HEK293 (cell line): ENCODE measurements at regions of chr10 and their contacts with region 1.

Region 1: DNA sequence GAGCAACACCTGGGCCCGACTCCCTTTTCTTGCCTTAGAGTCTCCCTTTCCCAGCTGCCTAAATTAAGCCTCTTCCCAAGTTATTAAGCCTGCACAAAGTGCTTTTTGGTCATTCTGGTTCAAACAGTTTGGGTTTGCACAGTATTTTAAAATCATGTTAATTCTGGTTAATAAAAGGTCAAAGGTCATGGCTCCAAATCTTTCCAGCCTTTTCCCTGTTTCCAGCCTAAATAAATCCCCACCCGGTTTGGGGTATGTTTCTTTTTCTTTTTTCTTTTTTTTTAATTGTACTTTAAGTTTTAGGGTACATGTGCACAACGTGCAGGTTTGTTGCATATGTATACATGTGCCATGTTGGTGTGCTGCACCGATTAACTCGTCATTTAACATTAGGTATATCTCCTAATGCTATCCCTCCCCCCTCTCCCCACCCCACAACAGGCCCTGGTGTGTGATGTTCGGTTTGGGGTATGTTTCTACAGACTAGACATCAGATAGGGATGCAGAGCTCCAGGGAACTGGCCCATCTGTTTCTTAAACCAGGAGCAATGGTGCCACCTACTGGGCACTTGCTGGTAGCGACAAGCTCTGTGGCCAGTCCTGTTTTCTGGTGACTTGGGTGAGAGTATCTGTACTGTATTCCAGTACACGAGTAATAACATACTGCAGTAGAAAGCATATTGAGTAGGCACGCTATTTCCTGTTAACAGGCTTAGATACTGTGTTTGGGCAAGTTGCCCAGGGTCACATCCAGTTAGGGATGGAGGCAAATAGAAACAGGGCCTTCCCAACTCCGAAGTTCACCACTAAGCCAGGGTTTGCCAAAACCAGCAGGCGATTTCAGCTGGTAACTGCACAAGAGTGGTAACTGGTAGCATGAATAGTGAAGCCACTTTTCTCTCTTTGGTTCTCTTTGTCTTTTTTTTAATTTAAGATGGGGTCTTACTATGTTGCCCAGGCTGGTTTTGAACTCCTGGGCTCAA is 60.6 kb upstream of the TRIM8 start:
- H3K4me3 ChIP-seq: no peak overlapping the region
- H3K27ac ChIP-seq: no peak overlapping the region
- H3K4me1 ChIP-seq: peaks cover 15% of the 10 kb centered on the region
- CTCF ChIP-seq: peak; percentile 76

Region 2: DNA sequence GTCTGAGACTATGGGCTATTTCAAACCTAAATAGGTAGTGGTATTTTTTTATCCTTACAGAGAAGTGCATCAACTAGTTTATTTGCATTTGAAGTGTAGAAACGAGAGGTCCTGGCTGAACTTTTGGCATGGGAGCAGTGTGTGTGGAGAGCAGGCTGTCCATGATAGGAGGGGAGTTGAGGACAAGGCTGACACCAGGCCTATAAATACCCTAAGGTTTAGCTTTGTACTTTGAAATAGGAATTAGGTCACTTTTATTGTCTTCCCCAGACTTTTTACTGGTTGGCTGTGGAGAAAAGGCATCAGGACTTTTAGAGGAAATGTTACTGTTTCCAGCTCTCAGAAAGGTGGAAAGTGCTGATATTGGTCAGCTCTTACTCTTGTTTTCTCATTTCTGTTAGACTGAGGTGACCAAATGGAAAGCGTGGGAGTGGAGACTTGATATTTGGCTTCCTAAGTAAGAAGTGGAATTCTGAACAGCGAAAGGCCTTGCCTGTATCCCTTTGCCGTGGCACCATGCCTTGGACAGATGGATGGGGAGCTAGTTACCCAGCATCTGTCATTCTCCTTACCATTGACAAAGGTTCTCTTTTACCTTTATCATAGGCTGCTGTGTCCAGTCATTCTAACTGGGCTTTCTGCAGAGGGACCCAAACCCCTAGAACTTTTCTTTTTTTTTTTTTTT is 292.4 kb before region 1 on chr10:
- CTCF ChIA-PET with region 1: no interaction called
- POLR2A ChIA-PET with region 1: no interaction called
- H3K4me3 ChIP-seq: no peak overlapping the region
- H3K27ac ChIP-seq: no peak overlapping the region
- H3K4me1 ChIP-seq: no peaks in the 10 kb centered on the region
- CTCF ChIP-seq: no peak

Region 3: DNA sequence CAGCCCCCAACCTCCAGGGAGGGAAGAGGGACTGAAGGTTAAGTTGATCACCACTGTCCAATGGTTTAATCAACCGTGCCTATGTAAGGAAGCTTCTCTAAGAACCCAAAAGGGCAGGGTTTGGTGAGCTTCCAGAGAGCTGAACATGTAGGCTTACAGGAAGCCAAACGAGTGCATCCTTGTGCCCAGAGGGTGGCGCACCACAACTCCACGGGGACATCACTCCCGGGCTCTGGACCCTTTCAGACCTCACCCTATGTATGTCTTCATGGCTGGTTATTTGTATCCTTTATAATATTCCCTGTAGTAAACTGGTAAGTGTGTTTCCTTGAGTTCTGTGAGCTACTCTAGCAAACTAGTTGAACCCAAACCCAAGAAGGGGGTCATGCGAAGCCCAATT is 199.7 kb before region 1 on chr10:
- CTCF ChIA-PET with region 1: interaction called, 15 read pairs
- POLR2A ChIA-PET with region 1: no interaction called
- H3K4me3 ChIP-seq: no peak overlapping the region
- H3K27ac ChIP-seq: no peak overlapping the region
- H3K4me1 ChIP-seq: 0 out of 2 replicates have a peak, but pooled peaks cover 2% of the 10 kb centered on the region
- CTCF ChIP-seq: no peak

Region 4: GRCh38 chr10:102476466-102477141 is 107.1 kb before region 1 on chr10:
- CTCF ChIA-PET with region 1: interaction called, 26 read pairs
- POLR2A ChIA-PET with region 1: no interaction called
- H3K4me3 ChIP-seq: no peak overlapping the region
- H3K27ac ChIP-seq: no peak overlapping the region
- H3K4me1 ChIP-seq: no peaks in the 10 kb centered on the region
- CTCF ChIP-seq: no peak

Region 5: DNA sequence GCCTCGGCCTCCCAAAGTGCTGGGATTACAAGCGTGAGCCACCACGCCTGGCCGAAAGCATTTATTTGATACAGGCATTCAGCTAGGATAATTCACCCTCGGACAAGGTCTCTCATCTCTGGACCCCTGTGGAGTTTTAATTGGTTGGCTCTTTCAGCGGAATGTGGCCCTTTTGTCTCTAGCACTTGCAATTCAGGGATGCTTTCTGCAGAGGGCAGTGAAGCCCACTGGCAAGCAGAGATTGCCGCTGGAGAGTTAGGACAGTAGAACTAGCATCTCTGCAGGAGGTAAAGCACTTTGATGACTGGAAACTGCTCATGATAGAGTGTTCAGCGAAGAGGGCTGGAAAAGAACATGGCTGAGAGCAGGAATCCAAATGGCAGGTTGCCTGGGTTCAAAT is 17.9 kb before region 1 on chr10:
- CTCF ChIA-PET with region 1: interaction called, 15 read pairs
- POLR2A ChIA-PET with region 1: no interaction called
- H3K4me3 ChIP-seq: no peak overlapping the region
- H3K27ac ChIP-seq: no peak overlapping the region
- H3K4me1 ChIP-seq: no peaks in the 10 kb centered on the region
- CTCF ChIP-seq: no peak

Region 6: DNA sequence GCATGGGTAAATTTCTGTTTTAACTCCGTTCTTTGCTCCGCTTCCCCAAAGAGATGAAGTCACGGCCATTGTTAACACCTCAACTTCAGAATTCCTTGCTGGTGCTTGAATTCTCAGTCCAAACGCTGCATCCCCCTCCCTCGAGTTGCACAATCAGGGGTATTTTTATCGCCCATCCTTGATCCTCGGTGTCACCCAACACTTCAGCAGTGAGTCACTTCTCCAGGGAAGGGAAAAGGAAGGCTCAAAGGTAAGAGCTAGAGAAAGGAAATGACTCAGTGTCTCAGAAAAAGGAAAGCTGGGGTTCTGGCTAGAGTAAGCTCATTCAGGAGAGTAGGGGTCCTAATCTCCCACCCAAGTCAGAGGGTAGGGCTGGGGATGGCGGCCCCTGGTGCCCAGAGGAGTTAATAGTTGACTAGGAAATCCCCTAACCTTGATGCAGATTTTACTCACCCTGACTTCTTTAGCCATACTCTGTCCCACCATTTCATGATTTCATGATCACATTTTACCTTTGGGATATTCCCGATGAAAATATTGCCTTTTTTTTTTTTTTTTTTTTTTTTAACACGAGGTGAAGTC is 20.7 kb after region 1 on chr10:
- CTCF ChIA-PET with region 1: interaction called, 10 read pairs
- POLR2A ChIA-PET with region 1: no interaction called
- H3K4me3 ChIP-seq: no peak overlapping the region
- H3K27ac ChIP-seq: no peak overlapping the region
- H3K4me1 ChIP-seq: no peaks in the 10 kb centered on the region
- CTCF ChIP-seq: no peak